ENCODE measurements at regions of chr15 and their contacts with region 1.

Region 1: GRCh38 chr15:45587095-45587860 is at the start of gene BLOC1S6:
- DNase-seq: peak; percentile 93
- ATAC-seq: peak; percentile 87
- H3K4me3 Mint-ChIP-seq: peak within 1 kb of the TSS; percentile 99
- H3K27ac Mint-ChIP-seq: peak within 1 kb of the TSS; percentile 100
- H3K4me1 Mint-ChIP-seq: peaks cover 44% of the 10 kb centered on the region
- H3K27me3 Mint-ChIP-seq: no peaks in the 10 kb centered on the region
- CTCF ChIP-seq: no peak
- total RNA-seq, gene BLOC1S6: 39.4 and 41.2 TPM in 2 replicates

Region 2: DNA sequence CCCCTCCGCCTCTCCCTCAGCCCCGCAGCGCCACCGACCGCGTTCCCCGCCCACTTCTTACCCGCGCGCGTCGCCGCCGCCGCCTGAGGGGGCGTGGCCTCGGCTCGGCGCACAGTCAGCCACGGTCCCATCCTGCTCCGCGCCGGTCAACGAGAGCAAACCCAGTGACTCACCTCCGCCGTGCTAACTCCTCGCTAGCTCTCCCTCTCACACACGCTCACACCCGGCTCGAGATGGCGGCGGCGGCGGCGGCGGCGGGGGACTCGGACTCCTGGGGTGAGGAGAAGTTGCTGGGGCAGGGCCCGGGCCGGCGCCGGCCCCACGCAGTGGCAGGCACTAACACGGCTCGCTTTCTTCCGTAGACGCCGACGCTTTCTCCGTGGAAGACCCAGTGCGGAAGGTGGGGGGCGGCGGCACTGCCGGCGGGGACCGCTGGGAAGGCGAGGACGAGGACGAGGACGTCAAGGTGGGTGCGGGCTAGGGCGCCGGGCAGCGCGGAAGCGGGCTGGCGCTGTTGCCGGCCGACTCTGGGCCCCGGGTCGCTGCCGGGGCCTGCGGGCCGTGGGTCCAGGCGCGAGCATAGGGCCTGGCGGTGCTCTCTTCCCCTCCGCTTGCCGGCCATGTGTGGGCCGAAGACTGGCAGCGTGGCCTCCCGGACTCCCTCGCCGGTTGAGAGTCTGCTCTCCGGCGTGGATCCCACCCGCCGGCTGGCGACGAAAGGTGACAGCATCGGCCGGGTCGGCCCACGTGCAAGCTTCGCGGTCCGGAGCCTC is 1050.1 kb before region 1 on chr15 and contains the start of gene EIF3J:
- CTCF ChIA-PET with region 1: no interaction called
- POLR2A ChIA-PET with region 1: no interaction called
- intact Hi-C with region 1: loop called (anchors 5 kb)
- DNase-seq: peak; percentile 90
- ATAC-seq: peak; percentile 89
- H3K4me3 Mint-ChIP-seq: peak within 1 kb of the TSS; percentile 92
- H3K27ac Mint-ChIP-seq: peak within 1 kb of the TSS; percentile 93
- H3K4me1 Mint-ChIP-seq: peaks cover 50% of the 10 kb centered on the region
- H3K27me3 Mint-ChIP-seq: no peaks in the 10 kb centered on the region
- CTCF ChIP-seq: no peak
- total RNA-seq, gene EIF3J: 78.9 and 88.4 TPM in 2 replicates

Region 3: DNA sequence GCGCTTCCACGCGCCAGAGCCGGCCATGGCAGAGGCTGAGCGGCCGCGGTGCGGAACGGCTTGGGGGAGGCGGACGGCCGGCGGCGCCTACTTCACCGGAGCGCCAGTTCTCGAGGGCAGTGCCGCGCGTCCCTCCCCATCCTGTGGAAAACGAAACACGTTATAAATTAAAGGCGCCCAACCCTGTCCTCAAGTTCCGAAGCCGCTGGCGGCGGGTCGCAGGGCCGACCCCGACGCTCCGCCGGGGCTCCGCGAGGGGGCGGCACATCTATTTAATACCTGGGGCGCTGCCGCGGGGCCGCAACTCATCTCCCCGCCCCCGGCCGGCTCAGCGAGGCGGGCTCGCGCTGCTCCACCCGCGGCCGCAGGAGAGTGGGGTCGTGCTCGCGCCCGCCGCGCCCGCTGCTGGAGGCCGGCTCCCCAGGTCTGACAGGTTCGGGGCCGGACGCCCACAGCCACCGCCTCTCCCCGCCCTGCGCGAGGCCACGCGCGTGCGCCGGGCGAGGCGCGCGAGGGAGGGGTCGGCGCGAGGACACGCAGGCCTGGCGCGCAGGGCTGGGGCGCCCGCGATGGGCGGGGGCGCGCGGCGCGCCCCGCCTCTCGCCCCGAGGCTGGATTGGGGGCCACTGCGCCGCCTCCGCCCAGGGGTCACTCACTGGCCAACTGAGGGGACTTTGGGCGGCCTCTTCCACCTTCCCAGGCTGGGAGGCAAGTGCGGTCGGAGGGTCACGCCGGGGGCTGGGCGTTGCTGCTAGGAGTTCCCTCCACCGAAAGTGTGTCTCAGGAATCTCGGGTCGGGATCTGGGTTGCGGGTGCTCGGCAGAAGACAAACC is 64.7 kb before region 1 on chr15 and contains the start of gene SLC30A4:
- CTCF ChIA-PET with region 1: interaction called, 7 read pairs
- POLR2A ChIA-PET with region 1: interaction called, 15 read pairs
- intact Hi-C with region 1: loop called (anchors 1 kb)
- DNase-seq: peak; percentile 76
- ATAC-seq: peak; percentile 86
- H3K4me3 Mint-ChIP-seq: peak within 1 kb of the TSS; percentile 90
- H3K27ac Mint-ChIP-seq: peak within 1 kb of the TSS; percentile 83
- H3K4me1 Mint-ChIP-seq: peaks cover 42% of the 10 kb centered on the region
- H3K27me3 Mint-ChIP-seq: no peaks in the 10 kb centered on the region
- CTCF ChIP-seq: no peak
- total RNA-seq, gene SLC30A4: 3.7 and 3.9 TPM in 2 replicates

Region 4: DNA sequence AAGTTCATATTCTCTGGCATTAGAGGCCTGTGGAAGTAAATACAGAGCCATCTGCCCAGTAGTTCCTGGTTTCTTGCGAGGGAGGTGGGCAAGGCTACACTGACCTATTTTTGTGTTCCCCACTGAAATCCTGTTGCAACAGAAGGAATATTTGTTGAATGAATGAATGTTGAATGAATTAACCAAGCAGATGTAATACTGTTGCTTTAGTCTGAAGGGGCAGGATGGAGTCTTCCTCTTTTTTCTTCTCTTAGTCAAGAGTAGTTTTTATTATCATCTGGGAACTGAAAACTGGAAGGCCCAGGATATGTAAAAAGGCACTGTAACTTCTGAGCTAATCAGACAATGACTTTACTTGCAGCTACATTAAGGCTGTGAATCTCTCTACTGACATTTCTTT is 17.0 kb after region 1 on chr15:
- CTCF ChIA-PET with region 1: interaction called, 3 read pairs
- POLR2A ChIA-PET with region 1: interaction called, 25 read pairs
- intact Hi-C with region 1: loop called (anchors 1 kb)
- DNase-seq: no peak
- ATAC-seq: no peak
- H3K4me3 Mint-ChIP-seq: peak overlapping the region; percentile 30
- H3K27ac Mint-ChIP-seq: peak overlapping the region; percentile 64
- H3K4me1 Mint-ChIP-seq: peaks cover 47% of the 10 kb centered on the region
- H3K27me3 Mint-ChIP-seq: no peaks in the 10 kb centered on the region
- CTCF ChIP-seq: no peak

Region 5: DNA sequence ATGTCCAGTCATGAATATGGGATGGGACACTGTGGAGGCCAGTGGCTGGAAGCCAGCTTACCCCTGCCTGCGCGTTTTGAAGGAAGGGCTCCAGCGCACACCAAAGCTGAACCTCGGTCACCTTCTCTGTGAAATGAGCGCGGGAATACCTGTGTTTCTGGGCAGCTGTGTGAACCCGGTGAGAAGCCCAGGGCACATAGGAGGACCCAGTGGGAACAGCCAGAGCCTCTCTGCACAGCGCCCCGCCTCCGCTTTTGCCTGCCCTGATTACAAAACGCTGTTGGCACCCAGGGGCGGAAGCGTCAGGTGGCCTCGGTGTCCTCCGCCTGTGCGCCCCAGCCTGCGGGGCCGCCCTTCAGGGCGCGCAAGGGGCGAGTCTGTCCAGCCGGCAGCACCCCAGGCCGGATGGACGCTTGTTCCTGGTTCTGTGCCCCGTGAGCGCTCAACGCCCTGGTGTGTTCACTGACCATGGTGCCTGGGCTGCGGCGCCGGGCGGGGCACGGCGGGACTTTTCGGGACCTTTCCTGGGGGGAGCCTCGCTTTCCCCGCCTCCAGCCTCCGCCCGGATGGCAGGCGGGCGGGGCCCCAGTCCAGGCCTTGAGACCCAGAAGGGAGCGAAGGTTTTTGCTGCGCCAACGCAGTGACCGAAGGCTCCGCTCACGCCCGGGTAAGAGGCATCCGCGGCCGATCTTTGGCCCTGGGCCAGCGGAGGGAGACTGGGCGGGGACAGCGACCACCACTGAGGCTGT is 47.3 kb after region 1 on chr15 and contains the start of gene SQOR:
- CTCF ChIA-PET with region 1: no interaction called
- POLR2A ChIA-PET with region 1: interaction called, 10 read pairs
- intact Hi-C with region 1: loop called (anchors 1 kb)
- DNase-seq: no peak
- ATAC-seq: peak; percentile 78
- H3K4me3 Mint-ChIP-seq: peak within 1 kb of the TSS; percentile 96
- H3K27ac Mint-ChIP-seq: peak within 1 kb of the TSS; percentile 94
- H3K4me1 Mint-ChIP-seq: peaks cover 33% of the 10 kb centered on the region
- H3K27me3 Mint-ChIP-seq: no peaks in the 10 kb centered on the region
- CTCF ChIP-seq: no peak
- total RNA-seq, gene SQOR: 39.2 and 44.9 TPM in 2 replicates

Measured in activated B cell treated with CpG ODN at 0.5 μM for 24 hours (primary cell).